AG04449 (cell line): ENCODE measurements at regions of chr11 and their contacts with region 1.

Region 1: DNA sequence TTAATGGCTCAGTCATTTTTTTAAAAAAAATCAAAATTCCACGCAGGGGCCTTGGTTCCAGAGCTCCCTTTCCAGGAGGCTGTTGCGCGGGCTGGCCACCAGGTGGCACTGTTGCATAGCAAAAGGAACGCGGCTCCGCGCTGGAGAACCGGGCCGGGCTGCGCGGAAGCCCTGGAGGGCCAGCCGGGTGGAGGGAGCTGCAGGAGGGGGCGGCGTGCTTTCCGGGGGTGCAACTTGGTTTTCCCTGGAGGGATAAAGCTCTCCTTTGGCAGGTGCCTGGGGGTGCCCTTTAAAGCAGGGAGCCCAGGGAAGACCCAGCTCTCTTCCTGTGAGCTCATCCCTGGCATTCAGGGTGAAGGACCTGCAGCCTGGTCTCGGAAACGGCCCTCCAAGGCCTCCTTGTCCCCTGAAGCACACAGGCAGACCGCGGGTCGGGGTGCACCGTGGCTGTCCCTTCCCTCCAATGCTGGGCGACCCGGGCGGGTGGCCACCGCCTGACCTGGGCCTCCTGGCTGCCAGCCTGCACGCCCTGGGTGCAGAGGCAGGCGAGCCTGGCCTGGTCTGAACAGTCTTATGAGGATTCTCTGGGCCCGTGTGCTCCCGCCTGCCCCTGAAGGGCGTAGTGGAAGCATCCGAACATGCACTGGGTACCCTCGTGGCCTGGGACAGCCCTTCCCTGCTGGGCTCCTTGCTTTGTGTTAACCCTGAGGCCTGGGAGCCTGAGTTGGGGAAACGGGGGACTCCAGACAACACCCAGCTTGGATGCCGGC is 23.4 kb downstream of the KRTAP5-5 start:
- DNase-seq: no peak
- H3K4me3 ChIP-seq: no peak overlapping the region
- CTCF ChIP-seq: peak; percentile 93

Region 2: GRCh38 chr11:1640076-1640946 is 12.6 kb before region 1 on chr11:
- CTCF ChIA-PET with region 1: interaction called, 134 read pairs
- POLR2A ChIA-PET with region 1: no interaction called
- DNase-seq: no peak
- H3K4me3 ChIP-seq: no peak overlapping the region
- CTCF ChIP-seq: peak; percentile 87

Region 3: DNA sequence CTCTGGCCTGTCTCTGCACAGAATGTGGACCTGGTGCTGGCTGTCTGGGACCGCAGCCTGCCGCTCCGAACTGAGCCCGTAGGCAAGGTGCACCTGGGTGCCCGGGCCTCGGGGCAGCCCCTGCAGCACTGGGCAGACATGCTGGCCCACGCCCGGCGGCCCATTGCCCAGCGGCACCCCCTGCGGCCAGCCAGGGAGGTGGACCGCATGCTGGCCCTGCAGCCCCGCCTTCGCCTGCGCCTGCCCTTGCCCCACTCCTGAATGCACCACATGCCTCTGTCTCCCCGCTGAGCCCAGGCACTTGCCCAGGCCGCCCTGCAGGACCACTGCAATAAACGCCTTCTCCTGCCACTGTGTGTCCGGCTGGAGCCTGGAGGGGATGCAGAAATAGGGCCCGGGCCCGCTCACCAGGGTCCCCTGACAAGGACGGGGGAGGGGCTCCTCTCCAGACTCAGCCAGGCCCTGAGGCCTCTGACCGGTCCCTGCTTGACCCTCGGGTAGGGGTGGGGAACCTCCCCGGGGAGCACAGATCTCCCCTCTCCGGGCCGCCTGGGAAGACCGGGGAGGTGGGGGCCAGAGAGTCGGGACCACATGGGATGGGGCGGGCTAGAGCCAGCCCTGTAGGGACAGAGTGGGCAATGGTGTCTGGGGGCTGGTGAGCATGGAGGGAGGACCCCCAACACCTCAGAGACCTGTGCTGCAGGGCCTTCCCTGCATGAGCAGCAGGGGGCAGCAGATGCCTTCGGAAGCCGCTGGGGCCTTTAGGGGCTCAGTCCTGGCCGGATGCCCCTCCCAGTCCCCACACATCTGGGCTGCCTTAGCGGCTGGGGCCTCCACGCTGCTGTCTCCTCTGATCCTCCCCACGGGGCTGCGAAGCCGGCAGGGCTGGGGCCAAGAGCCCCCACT is 184.5 kb after region 1 on chr11:
- CTCF ChIA-PET with region 1: interaction called, 121 read pairs
- POLR2A ChIA-PET with region 1: no interaction called
- DNase-seq: no peak
- H3K4me3 ChIP-seq: no peak overlapping the region
- CTCF ChIP-seq: peak; percentile 97

Region 4: GRCh38 chr11:1946812-1947484 is 294.0 kb after region 1 on chr11 and contains the start of gene MRPL23:
- CTCF ChIA-PET with region 1: interaction called, 19 read pairs
- POLR2A ChIA-PET with region 1: interaction called, 3 read pairs
- DNase-seq: no peak
- H3K4me3 ChIP-seq: no peak within 1 kb of the TSS
- CTCF ChIP-seq: no peak

Region 5: GRCh38 chr11:2002807-2003206 is 349.9 kb after region 1 on chr11:
- CTCF ChIA-PET with region 1: interaction called, 130 read pairs
- POLR2A ChIA-PET with region 1: no interaction called
- DNase-seq: no peak
- H3K4me3 ChIP-seq: no peak overlapping the region
- CTCF ChIP-seq: no peak